ENCODE measurements at regions of chr6 and their contacts with region 1.

Region 1: GRCh38 chr6:7825986-7826385 is 84.6 kb downstream of the TXNDC5 start:
- DNase-seq: no peak
- H3K4me3 ChIP-seq: no peak overlapping the region
- H3K27ac ChIP-seq: no peak overlapping the region
- H3K4me1 ChIP-seq: no peaks in the 10 kb centered on the region
- CTCF ChIP-seq: no peak

Region 2: DNA sequence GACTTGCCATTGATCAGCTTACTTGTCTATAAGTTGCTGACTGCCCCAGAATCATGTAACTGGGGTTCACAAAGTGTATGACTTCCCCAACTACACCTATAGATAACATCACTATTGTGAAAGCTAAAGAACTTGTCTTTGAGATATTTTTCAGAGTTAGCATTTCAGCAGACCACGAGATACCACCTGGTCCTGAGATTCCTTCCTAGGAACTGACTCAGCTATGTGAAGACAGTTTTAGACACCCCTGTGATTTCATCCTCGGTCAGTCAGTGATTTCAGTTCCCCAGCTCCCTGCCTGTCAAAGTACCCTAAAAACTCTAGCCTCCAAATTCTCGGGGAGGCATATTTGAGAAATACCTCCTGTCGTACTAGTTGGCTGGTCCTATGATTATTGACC is 22.2 kb after region 1 on chr6:
- CTCF ChIA-PET with region 1: no interaction called
- POLR2A ChIA-PET with region 1: no interaction called
- intact Hi-C with region 1: loop called (anchors 2 kb)
- DNase-seq: no peak
- H3K4me3 ChIP-seq: no peak overlapping the region
- H3K27ac ChIP-seq: no peak overlapping the region
- H3K4me1 ChIP-seq: no peaks in the 10 kb centered on the region
- CTCF ChIP-seq: no peak

Measured in OCI-LY7 (cell line).